Heart right ventricle (tissue), 16 donors: ENCODE measurements at regions of chr5 and their contacts with region 1.

Region 1: DNA sequence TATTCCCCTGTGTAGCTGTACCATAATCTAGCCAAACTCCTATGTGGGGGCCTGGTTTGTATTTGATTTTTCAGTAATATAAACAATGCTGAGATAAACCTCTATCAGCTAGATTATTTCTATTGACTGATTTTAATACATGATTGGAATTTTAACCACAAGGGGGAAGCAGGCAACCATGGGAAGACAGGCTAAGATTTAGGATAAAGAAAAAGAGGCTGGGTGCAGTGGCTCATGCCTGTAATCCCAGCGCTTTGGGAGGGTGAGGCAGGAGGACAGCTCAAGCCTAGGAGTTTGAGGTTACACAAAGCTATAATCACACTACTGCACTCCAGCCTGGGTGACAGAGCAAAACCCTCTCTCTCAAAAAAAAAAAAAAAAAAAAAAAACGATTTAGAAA is 18.1 kb upstream of the GPX3 start:
- DNase-seq: peak in 1 of 2 donors; percentile 38
- ATAC-seq: peak in 1 of 8 donors; percentile 41
- H3K4me3 ChIP-seq: no peak overlapping the region
- H3K27ac ChIP-seq: no peak overlapping the region
- H3K4me1 ChIP-seq: peaks cover 16 to 42% (median 34%) of the 10 kb centered on the region in 9 donors
- H3K27me3 ChIP-seq: no peaks in the 10 kb centered on the region
- CTCF ChIP-seq: peak; percentile 44 to 75 (median 66)

Region 2: DNA sequence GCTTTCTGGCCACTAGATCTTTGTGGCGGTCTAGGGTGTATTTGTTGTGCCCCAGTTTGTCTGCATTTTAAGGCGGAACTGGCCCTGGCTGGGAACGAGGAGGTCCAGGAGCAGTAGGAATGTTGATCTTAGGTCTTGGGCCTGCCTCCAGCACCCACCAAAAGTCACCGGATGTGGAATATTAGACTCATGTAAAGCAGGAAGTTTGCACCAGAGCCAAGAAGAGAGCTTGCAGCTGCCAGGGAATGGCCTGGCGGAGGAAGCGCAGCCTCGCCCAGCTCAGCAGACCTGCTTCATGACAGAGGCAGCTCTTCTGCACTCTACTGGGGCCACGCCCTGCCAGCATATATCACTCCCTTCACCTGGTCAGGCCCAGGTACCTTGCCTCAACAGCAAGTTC is 21.4 kb after region 1 on chr5:
- intact Hi-C with region 1: loop called in 1 of 10 experiments (anchors 2 kb)
- DNase-seq: peak; percentile 70 to 77
- ATAC-seq: peak; percentile 32 to 64 (median 41)
- H3K4me3 ChIP-seq: peak overlapping the region in 4 of 10 donors; percentile 2 to 87 (median 44)
- H3K27ac ChIP-seq: peak overlapping the region; percentile 76 to 96 (median 92)
- H3K4me1 ChIP-seq: peaks cover 38 to 96% (median 85%) of the 10 kb centered on the region in 9 donors
- H3K27me3 ChIP-seq: no peaks in the 10 kb centered on the region
- CTCF ChIP-seq: no peak

Region 3: DNA sequence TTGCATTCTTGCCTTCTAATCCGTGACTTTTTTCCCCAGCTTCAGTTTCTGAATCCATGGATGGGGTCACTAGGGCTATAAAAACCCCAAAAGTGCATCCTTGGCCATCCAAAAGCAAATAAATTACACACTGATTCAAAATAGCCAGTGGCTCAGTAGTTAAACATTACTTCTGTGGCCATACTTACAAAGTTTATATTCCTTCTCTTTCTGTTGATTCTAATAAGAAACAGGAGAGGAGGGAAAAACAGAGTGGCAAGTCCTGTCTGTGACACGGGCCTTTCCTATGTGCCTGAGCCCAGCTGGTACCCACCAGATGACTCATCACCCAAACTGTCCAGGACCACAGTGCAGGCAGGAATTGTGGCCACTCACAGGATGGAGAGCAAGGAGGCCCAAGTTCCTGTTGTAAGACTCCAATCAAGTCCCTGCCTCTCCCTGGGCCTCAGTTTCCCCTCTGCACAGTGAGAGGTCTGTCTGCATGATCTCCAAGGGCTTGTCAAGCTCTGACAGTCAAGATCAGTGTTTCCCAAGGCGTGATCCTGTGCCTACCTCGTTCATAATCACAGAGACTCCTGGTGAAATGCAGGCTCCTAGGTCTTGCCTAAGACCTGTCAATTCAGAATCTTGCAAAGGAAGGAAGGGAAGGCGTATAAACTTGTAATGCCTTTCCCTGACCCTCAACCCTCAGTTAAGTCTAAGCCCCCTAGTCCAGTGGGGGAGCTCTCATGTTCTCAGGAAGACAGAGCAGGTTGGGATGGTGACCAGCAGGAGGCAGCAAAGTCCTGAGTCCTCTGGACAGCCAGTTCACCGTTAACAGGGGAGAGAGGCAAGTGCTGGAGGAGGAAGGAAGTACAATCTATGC is 49.0 kb after region 1 on chr5:
- intact Hi-C with region 1: loop called in 9 of 10 experiments (anchors 1 to 5 kb)
- DNase-seq: peak; percentile 81 to 88
- ATAC-seq: peak; percentile 77 to 90 (median 84)
- H3K4me3 ChIP-seq: no peak overlapping the region
- H3K27ac ChIP-seq: peak overlapping the region in 6 of 10 donors; percentile 27 to 54 (median 40)
- H3K4me1 ChIP-seq: peaks cover 6 to 45% (median 15%) of the 10 kb centered on the region in 9 donors
- H3K27me3 ChIP-seq: no peaks in the 10 kb centered on the region
- CTCF ChIP-seq: peak; percentile 69 to 94 (median 88)

Region 4: GRCh38 chr5:151115274-151115905 is 113.1 kb after region 1 on chr5:
- intact Hi-C with region 1: loop called (anchors 1 to 10 kb)
- DNase-seq: peak; percentile 78 to 81
- ATAC-seq: peak in 6 of 8 donors; percentile 67 to 74 (median 70)
- H3K4me3 ChIP-seq: no peak overlapping the region
- H3K27ac ChIP-seq: peak overlapping the region in 1 of 10 donors; percentile 2
- H3K4me1 ChIP-seq: peaks cover 0 to 21% (median 8%) of the 10 kb centered on the region in 9 donors
- H3K27me3 ChIP-seq: no peaks in the 10 kb centered on the region
- CTCF ChIP-seq: peak; percentile 87 to 99 (median 96)

Region 5: GRCh38 chr5:151157426-151158286 is 155.4 kb after region 1 on chr5 and contains the start of gene ANXA6:
- intact Hi-C with region 1: loop called in 1 of 10 experiments (anchors 5 kb)
- DNase-seq: peak; percentile 89 to 92
- ATAC-seq: peak; percentile 98 to 99 (median 99)
- H3K4me3 ChIP-seq: peak within 1 kb of the TSS; percentile 58 to 95 (median 84)
- H3K27ac ChIP-seq: peak within 1 kb of the TSS; percentile 61 to 96 (median 89)
- H3K4me1 ChIP-seq: peaks cover 16 to 56% (median 48%) of the 10 kb centered on the region in 9 donors
- H3K27me3 ChIP-seq: no peaks in the 10 kb centered on the region
- CTCF ChIP-seq: no peak
- total RNA-seq, gene ANXA6: 182 to 275 (median 219) TPM

Region 6: DNA sequence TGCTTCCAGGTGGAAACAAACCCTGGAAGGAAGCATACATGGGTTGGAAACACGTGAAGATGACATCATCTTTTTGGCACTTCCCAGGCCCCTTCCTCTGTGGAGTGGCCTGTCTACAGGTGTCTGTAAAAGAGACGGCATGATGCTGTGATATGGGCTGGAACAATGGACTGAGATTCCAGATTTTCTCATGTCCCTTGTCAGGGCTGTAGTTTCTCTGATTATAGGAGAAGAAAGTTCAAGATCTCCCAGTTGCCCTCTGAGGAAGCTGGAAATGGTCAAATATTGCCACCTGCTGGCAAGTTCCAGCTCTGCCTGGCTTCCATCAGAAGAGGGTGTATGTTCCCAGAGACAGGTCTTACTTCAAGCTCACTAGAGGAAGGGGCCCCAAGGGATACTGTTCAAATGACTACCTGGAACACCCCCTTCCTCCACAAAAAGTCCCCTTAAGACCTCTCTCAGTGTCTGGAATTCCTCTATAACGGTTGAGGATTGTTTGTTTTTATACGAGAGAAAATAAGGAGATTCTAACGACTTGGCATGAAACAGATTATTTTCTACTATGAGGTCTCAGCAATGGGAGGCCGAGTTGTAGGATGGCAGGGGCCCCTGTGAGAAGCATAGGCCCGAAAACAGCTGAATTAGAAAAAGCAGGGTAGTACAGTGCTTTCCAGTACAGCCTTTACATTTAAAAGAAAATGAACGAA is 162.6 kb after region 1 on chr5:
- intact Hi-C with region 1: loop called in 4 of 10 experiments (anchors 2 to 5 kb)
- DNase-seq: peak; percentile 61 to 84
- ATAC-seq: peak; percentile 82 to 94 (median 91)
- H3K4me3 ChIP-seq: no peak overlapping the region
- H3K27ac ChIP-seq: peak overlapping the region in 3 of 10 donors; percentile 3 to 12 (median 9)
- H3K4me1 ChIP-seq: peaks cover 3 to 21% (median 13%) of the 10 kb centered on the region in 9 donors
- H3K27me3 ChIP-seq: no peaks in the 10 kb centered on the region
- CTCF ChIP-seq: peak; percentile 79 to 99 (median 90)